Pancreas (tissue), 10 donors: ENCODE measurements at regions of chr9 and their contacts with region 1.

Region 1: DNA sequence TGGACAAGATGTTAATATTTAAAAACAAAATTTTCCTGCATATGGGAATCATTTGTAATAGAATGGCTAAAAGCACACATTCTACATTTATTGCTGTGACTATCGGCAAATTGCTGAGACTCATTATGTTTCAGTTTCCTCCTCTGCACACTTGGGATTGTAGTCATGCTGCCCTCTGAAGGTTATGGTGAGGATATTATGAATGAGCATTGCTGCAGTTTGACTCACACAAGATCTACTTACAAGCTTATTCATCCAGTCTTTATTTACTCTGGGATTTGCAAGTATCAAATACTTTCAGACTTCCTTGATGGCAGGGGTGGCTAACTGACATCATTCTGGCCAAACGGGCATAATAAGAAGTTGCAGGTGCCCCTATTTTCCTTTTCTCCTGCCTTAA is 9.5 kb upstream of the NFIL3 start:
- DNase-seq: peak in 1 of 6 donors; percentile 23
- ATAC-seq: peak; percentile 86 to 99 (median 96)
- H3K4me3 ChIP-seq: no peak overlapping the region
- H3K27ac ChIP-seq: no peak overlapping the region
- H3K4me1 ChIP-seq: no peaks in the 10 kb centered on the region
- H3K27me3 ChIP-seq: no peaks in the 10 kb centered on the region
- CTCF ChIP-seq: peak in 3 of 4 donors; percentile 22 to 24 (median 24)

Region 2: GRCh38 chr9:90914868-90915483 is 518.2 kb before region 1 on chr9:
- intact Hi-C with region 1: loop called in 2 of 3 experiments (anchors 5 to 10 kb)
- DNase-seq: peak; percentile 58 to 91 (median 80)
- ATAC-seq: peak; percentile 95 to 99 (median 98)
- H3K4me3 ChIP-seq: no peak overlapping the region
- H3K27ac ChIP-seq: no peak overlapping the region
- H3K4me1 ChIP-seq: no peaks in the 10 kb centered on the region
- H3K27me3 ChIP-seq: no peaks in the 10 kb centered on the region
- CTCF ChIP-seq: peak; percentile 89 to 95 (median 91)

Region 3: GRCh38 chr9:91036826-91037510 is 396.2 kb before region 1 on chr9:
- intact Hi-C with region 1: loop called in 1 of 3 experiments (anchors 5 kb)
- DNase-seq: peak; percentile 61 to 79 (median 76)
- ATAC-seq: peak; percentile 83 to 96 (median 94)
- H3K4me3 ChIP-seq: no peak overlapping the region
- H3K27ac ChIP-seq: peak overlapping the region in 1 of 4 donors; percentile 79
- H3K4me1 ChIP-seq: peaks cover 7 to 14% (median 9%) of the 10 kb centered on the region in 3 donors
- H3K27me3 ChIP-seq: no peaks in the 10 kb centered on the region
- CTCF ChIP-seq: peak in 3 of 4 donors; percentile 23 to 48 (median 34)

Region 4: GRCh38 chr9:91089405-91090129 is 343.6 kb before region 1 on chr9:
- intact Hi-C with region 1: loop called in 1 of 3 experiments (anchors 10 kb)
- DNase-seq: peak in 1 of 6 donors; percentile 23
- ATAC-seq: peak; percentile 38 to 89 (median 78)
- H3K4me3 ChIP-seq: no peak overlapping the region
- H3K27ac ChIP-seq: no peak overlapping the region
- H3K4me1 ChIP-seq: no peaks in the 10 kb centered on the region
- H3K27me3 ChIP-seq: no peaks in the 10 kb centered on the region
- CTCF ChIP-seq: peak in 1 of 4 donors; percentile 14

Region 5: DNA sequence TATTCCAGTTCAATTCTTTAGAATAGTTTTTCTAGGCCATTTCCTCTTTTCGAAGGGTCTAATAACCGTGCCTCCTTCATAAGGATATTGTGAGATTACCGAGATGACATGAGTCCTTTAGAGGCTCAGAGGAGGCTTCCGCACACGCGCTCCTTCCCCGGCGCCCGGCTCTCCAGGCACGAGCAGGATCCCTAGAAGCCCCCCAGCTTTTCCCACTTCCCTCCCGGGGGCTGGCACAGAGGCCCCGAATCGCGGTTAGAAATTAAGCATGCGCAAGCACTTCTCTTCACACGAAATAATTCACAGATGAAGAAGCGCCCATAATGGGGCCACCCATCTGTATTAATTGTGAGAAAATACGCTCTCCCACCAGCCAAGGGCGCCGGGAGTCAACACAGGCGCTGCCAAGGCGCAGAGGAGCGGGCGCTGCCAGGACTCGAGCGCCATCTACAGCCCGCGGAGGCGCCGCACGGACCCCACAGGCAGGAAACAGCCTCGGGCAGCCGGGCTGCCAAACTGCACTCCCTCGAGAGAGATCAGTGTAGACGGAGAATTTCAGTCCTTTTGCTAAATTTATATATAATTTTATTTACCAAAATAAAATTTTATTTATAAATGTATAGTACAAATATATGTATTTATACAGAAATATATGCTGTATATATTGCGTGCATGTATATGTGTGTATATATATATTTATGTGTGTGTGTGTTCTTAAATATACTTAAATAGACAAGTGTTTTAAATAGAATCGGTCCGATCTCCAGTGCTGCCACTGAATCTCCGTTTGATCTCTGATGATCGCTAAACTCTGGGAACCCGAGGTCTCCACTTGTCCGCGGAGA is 248.5 kb after region 1 on chr9:
- intact Hi-C with region 1: loop called in 1 of 3 experiments (anchors 10 kb)
- DNase-seq: peak; percentile 60 to 93 (median 84)
- ATAC-seq: peak; percentile 99 to 100 (median 100)
- H3K4me3 ChIP-seq: no peak overlapping the region
- H3K27ac ChIP-seq: no peak overlapping the region
- H3K4me1 ChIP-seq: no peaks in the 10 kb centered on the region
- H3K27me3 ChIP-seq: no peaks in the 10 kb centered on the region
- CTCF ChIP-seq: peak; percentile 74 to 88 (median 84)